ENCODE measurements at regions of chr4 and their contacts with region 1.

Region 1: DNA sequence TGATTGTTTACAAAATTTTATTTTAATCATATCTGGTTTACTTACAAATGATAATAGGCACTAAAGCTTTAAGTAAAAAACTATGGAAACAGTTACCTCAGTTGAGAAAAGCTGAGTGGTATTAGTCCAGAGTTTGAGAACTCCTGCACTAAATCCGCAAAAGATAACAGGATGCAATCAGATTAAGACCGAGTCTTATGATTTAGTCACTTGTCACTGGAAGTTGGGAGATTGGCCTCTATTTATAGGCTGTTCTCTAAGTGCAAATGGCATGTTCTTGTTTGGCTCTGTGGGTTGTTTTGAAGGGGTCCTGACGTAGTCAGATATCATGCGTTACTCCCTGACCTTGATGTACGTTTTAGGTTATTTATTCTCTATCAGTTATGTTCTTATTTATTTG is 6.3 kb downstream of the GPAT3 start:
- DNase-seq: no peak
- H3K4me3 ChIP-seq: no peak overlapping the region
- H3K27ac ChIP-seq: no peak overlapping the region
- H3K4me1 ChIP-seq: peaks cover 0 to 9% (median 1%) of the 10 kb centered on the region in 4 experiments
- H3K27me3 ChIP-seq: no peaks in the 10 kb centered on the region

Region 2: GRCh38 chr4:83552924-83553323 is 10.7 kb after region 1 on chr4:
- CTCF ChIA-PET with region 1: interaction called, 12 read pairs
- POLR2A ChIA-PET with region 1: interaction called, 3 read pairs
- DNase-seq: peak; percentile 50 to 77 (median 69)
- H3K4me3 ChIP-seq: peak overlapping the region in 1 of 7 experiments; percentile 5
- H3K27ac ChIP-seq: peak overlapping the region; percentile 20 to 63
- H3K4me1 ChIP-seq: peaks cover 22 to 72% (median 56%) of the 10 kb centered on the region in 4 experiments
- H3K27me3 ChIP-seq: no peaks in the 10 kb centered on the region

Measured in common myeloid progenitor, CD34-positive (primary cell).